Naive thymus-derived CD4-positive, alpha-beta T cell (primary cell): ENCODE measurements at regions of chr11 and their contacts with region 1.

Region 1: DNA sequence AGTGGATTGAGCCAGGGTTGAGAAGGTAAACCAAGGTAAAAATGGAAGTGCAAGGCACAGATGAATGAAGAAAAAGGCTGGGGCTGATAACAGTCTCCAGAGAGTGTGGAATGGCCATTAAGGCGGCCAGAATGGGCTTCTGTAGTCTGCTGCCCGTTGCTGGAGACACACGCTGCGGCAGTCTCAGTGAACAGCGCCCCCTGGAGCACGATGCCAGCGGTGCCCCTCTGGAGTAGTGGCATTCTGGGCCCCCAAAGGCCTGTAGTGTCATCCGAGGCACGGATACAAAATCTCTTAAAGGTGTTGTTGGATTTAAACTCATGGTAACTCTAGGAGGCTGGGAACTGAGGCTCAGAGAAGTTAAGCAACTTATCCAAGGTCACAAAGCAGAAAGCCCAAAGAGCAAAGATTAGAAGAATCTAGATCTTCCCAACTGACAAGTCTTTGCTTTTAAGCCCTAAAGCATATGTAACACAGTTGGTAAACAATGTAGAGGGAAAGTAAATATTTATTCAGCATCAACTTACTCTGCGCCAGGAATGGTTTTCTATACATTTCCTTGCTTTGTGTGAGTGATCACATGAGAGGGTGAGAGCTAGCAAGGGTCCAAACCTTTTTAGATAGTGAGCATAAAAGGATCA is 18.2 kb downstream of the KCNJ1 start:
- DNase-seq: peak in 6 of 9 donors; percentile 30 to 61 (median 56)
- ATAC-seq: peak; percentile 83
- H3K4me3 ChIP-seq: no peak overlapping the region
- H3K4me3 Mint-ChIP-seq: no peak overlapping the region
- H3K27ac ChIP-seq: no peak overlapping the region
- H3K27ac Mint-ChIP-seq: peak overlapping the region in 3 of 9 donors; percentile 18 to 82 (median 54)
- H3K4me1 ChIP-seq: peaks cover 15 to 21% of the 10 kb centered on the region in 2 donors
- H3K4me1 Mint-ChIP-seq: peaks cover 22 to 39% (median 30%) of the 10 kb centered on the region in 7 donors
- H3K27me3 ChIP-seq: no peaks in the 10 kb centered on the region
- H3K27me3 Mint-ChIP-seq: peaks cover 0 to 2% (median 0%) of the 10 kb centered on the region in 5 donors

Region 2: GRCh38 chr11:128859563-128860441 is 10.9 kb after region 1 on chr11:
- CTCF ChIA-PET with region 1: interaction called, 13 read pairs
- POLR2A ChIA-PET with region 1: interaction called, 3 read pairs
- intact Hi-C with region 1: loop called in 1 of 2 experiments (anchors 2 kb)
- DNase-seq: peak; percentile 55 to 83 (median 66)
- ATAC-seq: peak; percentile 95
- H3K4me3 ChIP-seq: no peak overlapping the region
- H3K4me3 Mint-ChIP-seq: peak overlapping the region in 3 of 10 donors; percentile 12 to 26 (median 18)
- H3K27ac ChIP-seq: no peak overlapping the region
- H3K27ac Mint-ChIP-seq: no peak overlapping the region
- H3K4me1 ChIP-seq: peaks cover 0 to 4% of the 10 kb centered on the region in 2 donors
- H3K4me1 Mint-ChIP-seq: peaks cover 0 to 9% (median 5%) of the 10 kb centered on the region in 7 donors
- H3K27me3 ChIP-seq: no peaks in the 10 kb centered on the region
- H3K27me3 Mint-ChIP-seq: peaks cover 0 to 16% (median 0%) of the 10 kb centered on the region in 5 donors